Sciatic nerve (tissue), 2 donors: ENCODE measurements at regions of chr2 and their contacts with region 1.

Region 1: DNA sequence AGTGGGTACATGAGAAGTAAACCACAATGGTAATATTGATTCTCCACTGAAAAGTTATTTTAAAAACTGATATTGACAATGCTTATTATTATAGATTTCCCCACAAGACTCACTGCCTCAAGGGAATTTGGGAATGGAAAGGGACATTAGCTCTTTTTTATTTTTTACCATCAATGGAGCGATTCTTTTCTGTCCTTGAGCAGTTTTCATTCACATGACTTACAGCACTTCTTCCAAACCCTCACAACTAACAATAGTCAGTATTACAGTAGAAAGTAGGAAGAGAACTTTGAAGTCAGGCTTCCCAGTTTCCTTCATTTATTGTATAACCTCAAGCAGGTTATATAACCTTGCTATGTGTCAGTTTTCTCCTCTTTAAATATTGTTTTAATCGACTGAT is 4.3 kb upstream of the UNC80 start:
- DNase-seq: no peak
- ATAC-seq: no peak

Region 2: GRCh38 chr2:209876211-209876610 is 108.9 kb after region 1 on chr2:
- intact Hi-C with region 1: loop called (anchors 5 kb)
- DNase-seq: no peak
- ATAC-seq: no peak